ENCODE measurements at regions of chr9 and their contacts with region 1.

Region 1: GRCh38 chr9:4939118-4939561 is 45.9 kb upstream of the JAK2 start:
- DNase-seq: no peak
- ATAC-seq: peak; percentile 34
- H3K4me3 Mint-ChIP-seq: no peak overlapping the region
- H3K27ac Mint-ChIP-seq: peak overlapping the region; percentile 72
- H3K4me1 Mint-ChIP-seq: peaks cover 74% of the 10 kb centered on the region
- H3K27me3 Mint-ChIP-seq: no peaks in the 10 kb centered on the region

Region 2: DNA sequence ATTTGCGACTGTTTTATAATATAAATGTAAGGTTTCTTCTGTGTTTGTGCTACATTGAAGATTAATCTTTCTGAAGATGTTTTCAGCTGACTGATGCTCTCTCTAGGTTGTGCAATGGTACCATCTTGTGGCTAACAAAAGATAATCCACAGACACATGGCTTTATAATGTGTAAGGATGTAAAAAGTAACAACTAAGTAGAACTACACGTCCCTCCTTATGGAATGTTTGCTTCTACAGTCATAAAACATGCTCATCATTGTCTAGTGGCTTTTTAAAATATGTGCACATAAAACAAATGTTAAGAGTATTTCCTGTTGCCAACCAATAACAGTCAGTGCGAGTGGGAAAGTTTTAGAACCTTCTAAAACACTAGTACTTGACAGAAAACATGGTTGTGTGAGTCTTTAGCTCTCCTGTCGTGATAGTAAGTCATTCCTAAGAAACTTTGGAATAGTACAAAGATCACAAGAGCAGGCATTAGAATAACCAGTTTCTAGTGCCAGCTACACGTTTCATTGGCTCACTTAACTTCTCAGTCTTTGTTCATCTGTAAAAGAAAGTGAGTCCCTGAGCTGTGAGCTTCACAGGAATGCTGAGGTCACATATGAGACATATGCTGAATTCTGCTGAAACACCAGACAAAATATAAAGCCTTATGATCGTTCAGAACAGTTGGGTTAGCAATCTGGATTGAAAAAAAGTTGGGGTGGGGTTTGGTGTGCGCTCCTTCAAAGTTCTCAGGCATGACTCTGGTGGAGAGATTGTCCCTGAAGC is 563.5 kb before region 1 on chr9:
- CTCF ChIA-PET with region 1: no interaction called
- POLR2A ChIA-PET with region 1: no interaction called
- intact Hi-C with region 1: no loop called
- DNase-seq: no peak
- ATAC-seq: no peak
- H3K4me3 Mint-ChIP-seq: no peak overlapping the region
- H3K27ac Mint-ChIP-seq: no peak overlapping the region
- H3K4me1 Mint-ChIP-seq: peaks cover 2% of the 10 kb centered on the region
- H3K27me3 Mint-ChIP-seq: peaks cover 7% of the 10 kb centered on the region

Region 3: GRCh38 chr9:4604678-4605095 is 334.5 kb before region 1 on chr9:
- CTCF ChIA-PET with region 1: no interaction called
- POLR2A ChIA-PET with region 1: no interaction called
- intact Hi-C with region 1: loop called in 1 of 2 experiments (anchors 10 kb)
- DNase-seq: peak; percentile 82
- ATAC-seq: peak; percentile 84
- H3K4me3 Mint-ChIP-seq: no peak overlapping the region
- H3K27ac Mint-ChIP-seq: no peak overlapping the region
- H3K4me1 Mint-ChIP-seq: peaks cover 34% of the 10 kb centered on the region
- H3K27me3 Mint-ChIP-seq: no peaks in the 10 kb centered on the region

Region 4: DNA sequence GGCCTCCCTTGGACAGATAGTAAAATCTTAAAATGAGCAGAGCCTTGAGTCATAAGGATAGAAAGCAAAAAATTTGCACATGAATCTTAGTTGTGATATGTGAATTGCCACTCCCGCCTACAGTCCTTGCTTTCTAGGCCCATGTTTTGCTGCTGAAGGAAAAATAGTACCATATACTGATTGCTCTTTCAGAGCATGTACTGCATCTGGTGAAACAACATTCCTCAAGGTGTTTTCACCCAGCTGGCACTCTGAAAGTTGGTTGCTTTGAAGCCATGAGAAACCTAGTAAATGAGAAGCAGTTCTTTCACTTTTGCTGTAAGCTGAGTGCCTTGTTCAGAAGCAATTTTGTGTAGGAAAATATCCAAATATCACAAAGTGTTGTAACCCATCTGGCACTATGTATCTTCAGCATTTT is 249.4 kb before region 1 on chr9:
- CTCF ChIA-PET with region 1: no interaction called
- POLR2A ChIA-PET with region 1: no interaction called
- intact Hi-C with region 1: loop called in 1 of 2 experiments (anchors 5 kb)
- DNase-seq: peak; percentile 43
- ATAC-seq: peak; percentile 83
- H3K4me3 Mint-ChIP-seq: no peak overlapping the region
- H3K27ac Mint-ChIP-seq: peak overlapping the region; percentile 67
- H3K4me1 Mint-ChIP-seq: peaks cover 50% of the 10 kb centered on the region
- H3K27me3 Mint-ChIP-seq: no peaks in the 10 kb centered on the region

Region 5: GRCh38 chr9:4725706-4726442 is 213.3 kb before region 1 on chr9:
- CTCF ChIA-PET with region 1: no interaction called
- POLR2A ChIA-PET with region 1: no interaction called
- intact Hi-C with region 1: no loop called
- DNase-seq: no peak
- ATAC-seq: peak; percentile 72
- H3K4me3 Mint-ChIP-seq: no peak overlapping the region
- H3K27ac Mint-ChIP-seq: no peak overlapping the region
- H3K4me1 Mint-ChIP-seq: peaks cover 27% of the 10 kb centered on the region
- H3K27me3 Mint-ChIP-seq: no peaks in the 10 kb centered on the region

Region 6: DNA sequence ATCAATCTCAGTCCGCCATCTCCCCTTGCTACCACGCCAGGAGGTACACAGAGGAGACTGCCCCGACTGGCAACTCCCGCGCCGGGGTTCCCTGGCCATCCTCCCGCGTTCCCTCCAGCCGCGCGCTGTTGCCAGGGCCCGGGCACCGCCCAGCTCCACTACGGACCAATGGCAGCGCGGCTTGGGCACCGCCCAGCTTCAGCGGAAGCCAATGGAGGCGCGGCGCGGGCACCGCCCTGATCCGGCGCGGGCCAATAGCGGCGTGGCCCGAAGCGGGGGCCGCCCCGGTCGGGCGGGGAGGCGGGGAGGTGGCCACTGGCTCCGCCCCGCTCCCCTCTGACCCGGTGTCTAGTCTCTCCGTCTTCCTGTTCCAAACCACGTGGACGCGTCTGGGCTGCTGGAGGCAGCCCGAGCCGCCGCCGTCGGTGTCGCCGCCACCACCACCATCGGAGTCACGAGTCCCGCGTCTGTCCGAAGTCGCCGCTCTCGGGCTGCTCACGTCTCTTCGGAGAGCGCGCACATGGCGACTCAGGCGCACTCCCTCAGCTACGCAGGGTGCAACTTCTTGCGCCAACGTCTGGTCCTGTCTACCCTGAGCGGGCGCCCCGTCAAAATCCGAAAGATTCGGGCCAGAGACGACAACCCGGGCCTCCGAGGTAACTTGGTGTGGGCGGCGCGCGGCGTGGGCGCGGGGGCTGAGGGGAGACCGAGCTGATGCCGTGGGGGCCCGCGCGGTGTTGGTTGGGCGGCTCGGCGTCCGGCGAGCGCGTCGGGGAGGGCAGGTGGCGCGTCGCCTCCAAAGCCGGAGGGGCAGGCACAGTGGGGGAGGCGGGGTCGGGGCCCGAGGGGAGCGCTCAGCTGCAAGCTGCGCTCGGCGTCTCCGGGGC is 146.3 kb before region 1 on chr9 and contains the start of gene RCL1:
- CTCF ChIA-PET with region 1: no interaction called
- POLR2A ChIA-PET with region 1: no interaction called
- intact Hi-C with region 1: loop called in 1 of 2 experiments (anchors 1 kb)
- DNase-seq: peak; percentile 98
- ATAC-seq: peak; percentile 96
- H3K4me3 Mint-ChIP-seq: peak within 1 kb of the TSS; percentile 97
- H3K27ac Mint-ChIP-seq: peak within 1 kb of the TSS; percentile 89
- H3K4me1 Mint-ChIP-seq: peaks cover 44% of the 10 kb centered on the region
- H3K27me3 Mint-ChIP-seq: no peaks in the 10 kb centered on the region
- total RNA-seq, gene RCL1: 27.0 to 36.4 TPM

Region 7: DNA sequence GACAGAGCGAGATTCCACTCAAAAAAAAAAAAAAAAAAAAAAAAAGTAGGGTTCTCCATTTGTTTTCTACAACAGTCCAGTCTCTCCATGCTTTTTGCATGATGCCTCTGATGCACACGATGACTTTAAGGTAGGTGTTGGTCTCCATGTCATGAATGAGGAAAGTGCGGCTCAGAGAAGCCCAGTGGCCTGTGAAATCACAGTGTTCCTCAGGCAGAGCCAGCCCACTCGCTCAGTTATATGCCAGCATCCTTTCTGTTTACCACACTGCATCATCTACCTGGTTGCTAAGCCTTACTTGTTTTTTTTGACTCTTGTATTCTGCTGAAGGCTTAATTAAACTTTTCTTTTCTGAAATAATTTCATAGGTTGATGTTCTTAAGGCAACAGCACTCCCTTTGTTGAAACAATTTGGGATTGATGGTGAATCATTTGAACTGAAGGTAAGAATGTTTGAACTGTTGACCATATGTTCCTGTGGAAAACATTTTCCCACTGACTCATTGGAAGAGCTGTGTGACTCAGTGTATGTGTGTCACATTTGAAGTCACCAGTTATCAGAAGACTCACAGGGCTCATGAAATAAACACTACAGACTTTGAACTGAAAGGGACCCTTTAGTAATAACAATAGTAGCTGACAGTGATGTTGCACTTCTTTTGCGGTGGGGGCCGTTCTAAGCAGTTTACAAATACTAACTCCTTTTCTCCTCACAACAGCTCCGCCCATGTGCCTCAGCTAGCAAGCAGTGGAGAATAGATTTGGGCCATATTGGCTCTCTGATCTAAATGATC is 106.2 kb before region 1 on chr9:
- CTCF ChIA-PET with region 1: interaction called, 3 read pairs
- POLR2A ChIA-PET with region 1: no interaction called
- intact Hi-C with region 1: loop called (anchors 1 to 2 kb)
- DNase-seq: peak; percentile 81
- ATAC-seq: peak; percentile 94
- H3K4me3 Mint-ChIP-seq: peak overlapping the region; percentile 16
- H3K27ac Mint-ChIP-seq: peak overlapping the region; percentile 84
- H3K4me1 Mint-ChIP-seq: peaks cover 45% of the 10 kb centered on the region
- H3K27me3 Mint-ChIP-seq: no peaks in the 10 kb centered on the region

Region 8: GRCh38 chr9:4970970-4971641 is 32.0 kb after region 1 on chr9:
- CTCF ChIA-PET with region 1: interaction called, 4 read pairs
- POLR2A ChIA-PET with region 1: interaction called, 4 read pairs
- intact Hi-C with region 1: loop called (anchors 1 kb)
- DNase-seq: peak; percentile 85
- ATAC-seq: peak; percentile 94
- H3K4me3 Mint-ChIP-seq: no peak overlapping the region
- H3K27ac Mint-ChIP-seq: no peak overlapping the region
- H3K4me1 Mint-ChIP-seq: peaks cover 18% of the 10 kb centered on the region
- H3K27me3 Mint-ChIP-seq: no peaks in the 10 kb centered on the region

Region 9: GRCh38 chr9:5450359-5451091 is 511.4 kb after region 1 on chr9 and contains the start of gene CD274:
- CTCF ChIA-PET with region 1: no interaction called
- POLR2A ChIA-PET with region 1: no interaction called
- intact Hi-C with region 1: loop called in 1 of 2 experiments (anchors 5 kb)
- DNase-seq: peak; percentile 94
- ATAC-seq: peak; percentile 66
- H3K4me3 Mint-ChIP-seq: peak within 1 kb of the TSS; percentile 98
- H3K27ac Mint-ChIP-seq: peak within 1 kb of the TSS; percentile 90
- H3K4me1 Mint-ChIP-seq: peaks cover 77% of the 10 kb centered on the region
- H3K27me3 Mint-ChIP-seq: no peaks in the 10 kb centered on the region
- total RNA-seq, gene CD274: 25.0 to 30.1 TPM

Measured in activated CD4-positive, alpha-beta T cell treated with anti-CD3 and anti-CD28 coated beads for 36 hours (primary cell).